AG04450 (cell line): ENCODE measurements at regions of chr2 and their contacts with region 1.

Region 1: DNA sequence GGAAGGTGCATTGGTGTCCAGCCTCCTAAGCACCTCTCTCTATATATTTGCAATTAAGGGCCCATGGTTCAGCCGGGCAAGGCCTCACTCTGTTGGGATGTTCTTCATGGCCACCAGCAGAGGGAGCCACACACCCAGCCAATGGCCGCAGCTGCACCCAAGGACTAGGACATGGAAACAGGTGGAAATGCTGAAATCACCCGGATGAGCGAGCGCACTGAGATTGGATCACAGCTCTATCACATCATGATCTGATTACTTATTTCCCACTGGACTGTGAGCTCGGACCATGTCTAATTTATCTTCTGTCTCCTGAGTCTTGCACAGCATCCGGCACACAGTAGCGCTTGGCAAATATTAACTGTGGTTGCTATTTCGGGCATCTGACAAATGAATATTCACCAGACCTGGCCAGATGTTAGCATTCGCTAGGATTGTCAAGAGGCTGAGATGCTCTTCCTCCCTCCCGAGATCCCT is 31.2 kb downstream of the KIF3C start:
- DNase-seq: peak; percentile 58
- H3K4me3 ChIP-seq: no peak overlapping the region
- H3K27ac ChIP-seq: no peak overlapping the region
- H3K27me3 ChIP-seq: no peaks in the 10 kb centered on the region
- CTCF ChIP-seq: peak; percentile 97

Region 2: DNA sequence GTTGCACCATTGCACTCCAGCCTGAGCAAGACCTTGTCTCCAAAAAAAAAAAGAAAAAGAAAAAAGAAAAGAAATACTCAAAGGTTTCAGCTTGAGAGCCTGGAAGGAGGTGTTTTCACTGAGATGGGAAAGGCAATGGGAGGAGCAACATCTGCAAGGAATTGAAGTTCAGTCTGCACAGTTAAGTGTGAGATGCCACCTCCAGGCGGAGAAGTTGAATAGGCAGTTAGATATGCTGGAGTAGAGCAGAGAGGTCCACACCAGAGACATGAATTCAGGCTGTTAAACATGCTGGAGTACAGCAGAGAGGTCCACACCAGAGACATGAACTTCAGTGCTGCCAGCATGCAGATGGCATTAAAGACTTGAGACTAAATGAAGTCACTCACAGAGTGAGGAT is 236.4 kb before region 1 on chr2:
- CTCF ChIA-PET with region 1: no interaction called
- POLR2A ChIA-PET with region 1: no interaction called
- DNase-seq: no peak
- H3K4me3 ChIP-seq: no peak overlapping the region
- H3K27ac ChIP-seq: no peak overlapping the region
- H3K27me3 ChIP-seq: peaks cover 9% of the 10 kb centered on the region
- CTCF ChIP-seq: peak; percentile 13; the same call in 1 of the 2 replicates

Region 3: GRCh38 chr2:25784408-25784807 is 166.7 kb before region 1 on chr2:
- CTCF ChIA-PET with region 1: no interaction called
- POLR2A ChIA-PET with region 1: no interaction called
- DNase-seq: no peak
- H3K4me3 ChIP-seq: no peak overlapping the region
- H3K27ac ChIP-seq: no peak overlapping the region
- H3K27me3 ChIP-seq: no peaks in the 10 kb centered on the region
- CTCF ChIP-seq: no peak

Region 4: GRCh38 chr2:25936889-25937545 is 14.1 kb before region 1 on chr2:
- CTCF ChIA-PET with region 1: interaction called, 22 read pairs
- POLR2A ChIA-PET with region 1: no interaction called
- DNase-seq: no peak
- H3K4me3 ChIP-seq: no peak overlapping the region
- H3K27ac ChIP-seq: no peak overlapping the region
- H3K27me3 ChIP-seq: no peaks in the 10 kb centered on the region
- CTCF ChIP-seq: no peak

Region 5: GRCh38 chr2:26034637-26034992 is 83.5 kb after region 1 on chr2:
- CTCF ChIA-PET with region 1: interaction called, 12 read pairs
- POLR2A ChIA-PET with region 1: no interaction called
- DNase-seq: no peak
- H3K4me3 ChIP-seq: peak overlapping the region; percentile 100
- H3K27ac ChIP-seq: peak overlapping the region; percentile 75
- H3K27me3 ChIP-seq: no peaks in the 10 kb centered on the region
- CTCF ChIP-seq: no peak

Region 6: GRCh38 chr2:26144953-26145680 is 194.0 kb after region 1 on chr2:
- CTCF ChIA-PET with region 1: interaction called, 109 read pairs
- POLR2A ChIA-PET with region 1: no interaction called
- DNase-seq: peak; percentile 7
- H3K4me3 ChIP-seq: no peak overlapping the region
- H3K27ac ChIP-seq: no peak overlapping the region
- H3K27me3 ChIP-seq: no peaks in the 10 kb centered on the region
- CTCF ChIP-seq: peak; percentile 80

Region 7: GRCh38 chr2:26150243-26150642 is 199.1 kb after region 1 on chr2:
- CTCF ChIA-PET with region 1: interaction called, 109 read pairs
- POLR2A ChIA-PET with region 1: no interaction called
- DNase-seq: no peak
- H3K4me3 ChIP-seq: no peak overlapping the region
- H3K27ac ChIP-seq: no peak overlapping the region
- H3K27me3 ChIP-seq: no peaks in the 10 kb centered on the region
- CTCF ChIP-seq: no peak

Region 8: GRCh38 chr2:26184555-26185303 is 233.6 kb after region 1 on chr2:
- CTCF ChIA-PET with region 1: interaction called, 19 read pairs
- POLR2A ChIA-PET with region 1: no interaction called
- DNase-seq: peak; percentile 45
- H3K4me3 ChIP-seq: peak overlapping the region; percentile 60
- H3K27ac ChIP-seq: no peak overlapping the region
- H3K27me3 ChIP-seq: no peaks in the 10 kb centered on the region
- CTCF ChIP-seq: peak; percentile 54